Activated naive CD4-positive, alpha-beta T cell treated with anti-CD3 and anti-CD28 coated beads for 36 hours (primary cell): ENCODE measurements at regions of chr15 and their contacts with region 1.

Region 1: DNA sequence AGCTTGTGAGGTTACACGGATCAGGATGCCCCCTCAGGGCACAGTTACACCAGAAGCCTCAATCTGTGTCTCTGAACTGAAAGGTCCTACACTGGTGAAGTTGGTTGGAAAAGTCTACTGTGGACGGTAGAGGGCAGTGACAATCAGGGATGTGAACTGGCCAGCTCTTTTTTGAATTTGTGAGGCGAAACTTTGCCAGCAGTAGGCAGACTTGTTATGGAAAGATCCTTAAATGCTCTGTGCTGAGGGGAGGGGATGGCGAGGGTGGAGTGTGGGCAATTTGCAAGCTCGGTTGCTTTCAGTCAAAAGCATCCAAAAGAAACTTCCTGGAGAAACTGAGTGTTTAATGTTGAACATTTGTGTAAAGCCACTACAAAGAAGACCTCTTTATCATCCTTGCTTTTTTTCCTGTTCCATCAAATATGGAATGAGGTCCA is 127.4 kb upstream of the ABHD17C start:
- DNase-seq: peak; percentile 46
- H3K4me3 Mint-ChIP-seq: no peak overlapping the region
- H3K27ac Mint-ChIP-seq: no peak overlapping the region
- H3K4me1 Mint-ChIP-seq: no peaks in the 10 kb centered on the region
- H3K27me3 Mint-ChIP-seq: peaks cover 12% of the 10 kb centered on the region

Region 2: GRCh38 chr15:80721476-80721875 is 153.7 kb after region 1 on chr15:
- CTCF ChIA-PET with region 1: no interaction called
- intact Hi-C with region 1: no loop called
- DNase-seq: no peak
- H3K4me3 Mint-ChIP-seq: no peak overlapping the region
- H3K27ac Mint-ChIP-seq: no peak overlapping the region
- H3K4me1 Mint-ChIP-seq: no peaks in the 10 kb centered on the region
- H3K27me3 Mint-ChIP-seq: no peaks in the 10 kb centered on the region

Region 3: GRCh38 chr15:80970018-80970658 is 402.4 kb after region 1 on chr15:
- CTCF ChIA-PET with region 1: interaction called, 6 read pairs
- intact Hi-C with region 1: loop called (anchors 1 kb)
- DNase-seq: peak; percentile 76
- H3K4me3 Mint-ChIP-seq: no peak overlapping the region
- H3K27ac Mint-ChIP-seq: no peak overlapping the region
- H3K4me1 Mint-ChIP-seq: peaks cover 8% of the 10 kb centered on the region
- H3K27me3 Mint-ChIP-seq: no peaks in the 10 kb centered on the region